CD14-positive monocyte (primary cell): ENCODE measurements at regions of chr7 and their contacts with region 1.

Region 1: GRCh38 chr7:138161600-138162081 is 85.4 kb downstream of the AKR1D1 start:
- DNase-seq: peak; percentile 84 to 94 (median 90)
- H3K4me3 ChIP-seq: no peak overlapping the region
- H3K4me3 Mint-ChIP-seq: no peak overlapping the region
- H3K27ac ChIP-seq: no peak overlapping the region
- H3K27ac Mint-ChIP-seq: no peak overlapping the region
- H3K4me1 ChIP-seq: no peaks in the 10 kb centered on the region
- H3K4me1 Mint-ChIP-seq: no peaks in the 10 kb centered on the region
- H3K27me3 ChIP-seq: no peaks in the 10 kb centered on the region
- H3K27me3 Mint-ChIP-seq: no peaks in the 10 kb centered on the region
- CTCF ChIP-seq: peak; percentile 72

Region 2: GRCh38 chr7:138144958-138145357 is 16.7 kb before region 1 on chr7:
- intact Hi-C with region 1: no loop called
- DNase-seq: no peak
- H3K4me3 ChIP-seq: no peak overlapping the region
- H3K4me3 Mint-ChIP-seq: no peak overlapping the region
- H3K27ac ChIP-seq: no peak overlapping the region
- H3K27ac Mint-ChIP-seq: no peak overlapping the region
- H3K4me1 ChIP-seq: no peaks in the 10 kb centered on the region
- H3K4me1 Mint-ChIP-seq: peaks cover 3% of the 10 kb centered on the region
- H3K27me3 ChIP-seq: no peaks in the 10 kb centered on the region
- H3K27me3 Mint-ChIP-seq: peaks cover 1 to 2% (median 1%) of the 10 kb centered on the region in 3 donors
- CTCF ChIP-seq: no peak

Region 3: DNA sequence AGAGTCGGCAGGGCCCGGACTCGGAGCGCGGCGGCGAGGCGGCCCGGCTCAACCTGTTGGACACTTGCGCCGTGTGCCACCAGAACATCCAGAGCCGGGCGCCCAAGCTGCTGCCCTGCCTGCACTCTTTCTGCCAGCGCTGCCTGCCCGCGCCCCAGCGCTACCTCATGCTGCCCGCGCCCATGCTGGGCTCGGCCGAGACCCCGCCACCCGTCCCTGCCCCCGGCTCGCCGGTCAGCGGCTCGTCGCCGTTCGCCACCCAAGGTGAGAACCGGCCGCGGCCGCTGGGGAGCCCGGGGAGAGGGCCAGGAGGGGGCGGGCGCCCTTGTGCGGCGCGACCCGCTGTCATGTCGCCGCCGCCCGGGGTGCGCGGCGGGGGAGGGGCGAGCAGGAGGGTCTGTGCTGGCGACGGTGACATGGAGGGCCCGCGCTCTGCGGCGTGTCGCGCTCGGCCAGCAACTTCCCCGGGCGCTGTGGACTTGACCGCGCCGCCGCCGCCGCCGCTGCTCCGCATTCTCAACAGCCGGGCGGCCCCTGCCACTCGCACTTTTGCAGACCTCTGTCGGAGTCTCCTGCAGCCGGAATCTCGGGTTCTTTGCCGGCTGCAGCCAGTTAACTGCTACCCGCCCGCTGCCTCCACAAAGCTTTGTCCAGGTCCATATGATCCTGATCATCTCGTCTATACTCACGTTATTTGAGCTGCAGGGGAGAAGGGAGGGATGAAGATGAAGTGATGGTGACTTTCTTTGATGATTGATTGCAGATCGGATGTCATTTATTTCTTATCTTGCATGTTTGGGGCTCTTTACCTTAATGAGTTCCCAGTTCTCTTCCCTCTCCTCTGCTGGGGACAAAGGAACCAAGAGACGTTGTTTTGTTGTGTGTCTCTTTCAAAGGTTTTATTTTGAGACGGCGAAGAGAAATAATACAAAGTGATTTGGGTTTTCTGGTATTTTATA is 299.3 kb after region 1 on chr7:
- intact Hi-C with region 1: no loop called
- DNase-seq: peak; percentile 30 to 54 (median 36)
- H3K4me3 ChIP-seq: peak overlapping the region; percentile 80 to 99 (median 81)
- H3K4me3 Mint-ChIP-seq: peak overlapping the region; percentile 96 to 97
- H3K27ac ChIP-seq: peak overlapping the region; percentile 58 to 84
- H3K27ac Mint-ChIP-seq: peak overlapping the region; percentile 78 to 92 (median 88)
- H3K4me1 ChIP-seq: peaks cover 13 to 16% of the 10 kb centered on the region in 2 donors
- H3K4me1 Mint-ChIP-seq: peaks cover 36% of the 10 kb centered on the region
- H3K27me3 ChIP-seq: no peaks in the 10 kb centered on the region
- H3K27me3 Mint-ChIP-seq: peaks cover 0 to 1% (median 0%) of the 10 kb centered on the region in 3 donors
- CTCF ChIP-seq: peak; percentile 13

Region 4: DNA sequence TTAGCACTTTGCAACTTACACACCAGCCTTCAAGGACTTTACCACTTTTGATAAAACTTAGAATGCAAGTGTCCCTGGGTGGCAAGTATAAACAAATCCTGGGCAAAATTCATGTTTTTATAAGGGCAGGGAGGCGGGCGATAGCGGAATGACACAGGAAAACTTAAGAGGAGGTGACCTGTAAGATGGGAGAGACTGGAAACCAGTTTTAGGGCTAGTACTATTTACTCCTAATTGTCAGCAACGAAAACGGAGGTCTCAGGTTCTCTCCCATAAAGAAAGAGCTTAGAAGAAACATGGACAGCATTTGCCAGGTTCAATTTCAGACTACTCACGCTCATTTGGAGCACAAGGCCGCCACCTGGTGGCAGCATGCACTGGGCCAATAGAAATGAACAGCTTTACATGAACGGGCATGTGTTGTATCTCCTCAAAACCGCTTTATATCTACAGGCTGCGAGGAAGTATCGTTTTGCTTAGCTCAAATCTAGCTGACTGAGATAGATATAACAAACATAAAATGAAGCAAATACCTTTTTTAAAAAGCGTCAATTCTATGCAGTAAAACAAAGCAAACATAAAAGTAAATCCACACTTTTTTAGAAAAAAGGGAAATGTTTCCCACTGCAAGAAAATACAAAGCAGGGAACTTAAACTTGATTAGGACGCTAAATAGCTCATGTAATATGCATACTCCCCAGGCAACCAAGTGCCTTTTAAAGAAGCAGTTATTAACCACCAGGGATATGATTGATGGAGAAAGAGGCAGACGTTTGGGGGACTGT is 577.1 kb after region 1 on chr7:
- intact Hi-C with region 1: loop called (anchors 2 to 5 kb)
- DNase-seq: peak; percentile 56 to 61 (median 58)
- H3K4me3 ChIP-seq: no peak overlapping the region
- H3K4me3 Mint-ChIP-seq: peak overlapping the region in 1 of 2 donors; percentile 64
- H3K27ac ChIP-seq: no peak overlapping the region
- H3K27ac Mint-ChIP-seq: no peak overlapping the region
- H3K4me1 ChIP-seq: no peaks in the 10 kb centered on the region
- H3K4me1 Mint-ChIP-seq: peaks cover 7% of the 10 kb centered on the region
- H3K27me3 ChIP-seq: no peaks in the 10 kb centered on the region
- H3K27me3 Mint-ChIP-seq: peaks cover 0 to 5% (median 1%) of the 10 kb centered on the region in 3 donors
- CTCF ChIP-seq: peak; percentile 94